B cell (primary cell): ENCODE measurements at regions of chr1 and their contacts with region 1.

Region 1: DNA sequence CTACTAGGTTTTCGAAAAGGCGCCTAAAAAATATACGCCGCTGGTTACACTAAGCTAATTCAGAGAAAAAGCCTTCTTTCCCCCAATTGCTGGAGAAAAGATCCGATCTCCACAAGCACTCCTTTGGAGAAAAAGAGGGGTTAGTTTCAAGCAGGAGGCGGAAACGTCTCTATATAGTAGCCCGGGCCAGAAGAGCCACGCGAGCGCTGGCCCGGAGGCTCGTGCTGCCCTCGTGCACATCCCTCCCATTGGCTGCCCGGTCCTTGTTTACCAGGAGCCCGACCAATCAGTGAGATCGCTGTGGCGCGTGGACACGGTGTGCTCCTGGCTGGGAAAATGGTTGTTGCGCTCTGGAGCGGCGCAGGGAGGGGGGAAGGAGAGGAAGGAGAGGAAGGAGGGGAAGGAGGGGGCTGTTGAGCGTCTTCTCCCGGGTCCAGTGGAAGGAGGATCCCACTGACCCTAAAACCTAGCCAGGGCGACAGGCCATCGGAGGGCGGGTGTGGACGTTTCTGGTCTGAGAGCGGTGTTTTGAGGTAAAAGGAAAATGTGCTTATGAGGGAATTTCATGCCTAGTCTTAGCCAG is at the start of gene TXNIP:
- DNase-seq: peak; percentile 89
- ATAC-seq: peak; percentile 72
- H3K4me3 ChIP-seq: peak within 1 kb of the TSS; percentile 81 to 100 (median 95)
- H3K4me3 Mint-ChIP-seq: peak within 1 kb of the TSS; percentile 95
- H3K27ac ChIP-seq: peak within 1 kb of the TSS; percentile 82 to 96
- H3K27ac Mint-ChIP-seq: peak within 1 kb of the TSS; percentile 100
- H3K4me1 ChIP-seq: peaks cover 56 to 67% of the 10 kb centered on the region in 2 donors
- H3K4me1 Mint-ChIP-seq: peaks cover 73% of the 10 kb centered on the region
- H3K27me3 ChIP-seq: no peaks in the 10 kb centered on the region
- H3K27me3 Mint-ChIP-seq: no peaks in the 10 kb centered on the region
- CTCF ChIP-seq: no peak
- total RNA-seq, gene TXNIP: 522 and 542 TPM in 2 replicates

Region 2: GRCh38 chr1:145918144-145918992 is 78.2 kb before region 1 on chr1 and contains the start of gene PEX11B:
- CTCF ChIA-PET with region 1: no interaction called
- POLR2A ChIA-PET with region 1: interaction called, 4 read pairs
- intact Hi-C with region 1: loop called (anchors 2 kb)
- DNase-seq: peak; percentile 97
- ATAC-seq: peak; percentile 90
- H3K4me3 ChIP-seq: peak within 1 kb of the TSS; percentile 69 to 98 (median 80)
- H3K4me3 Mint-ChIP-seq: peak within 1 kb of the TSS; percentile 92
- H3K27ac ChIP-seq: peak within 1 kb of the TSS; percentile 74 to 79
- H3K27ac Mint-ChIP-seq: peak within 1 kb of the TSS; percentile 95
- H3K4me1 ChIP-seq: peaks cover 15 to 24% of the 10 kb centered on the region in 2 donors
- H3K4me1 Mint-ChIP-seq: peaks cover 36% of the 10 kb centered on the region
- H3K27me3 ChIP-seq: no peaks in the 10 kb centered on the region
- H3K27me3 Mint-ChIP-seq: no peaks in the 10 kb centered on the region
- CTCF ChIP-seq: no peak
- total RNA-seq, gene PEX11B: 39.1 and 48.1 TPM in 2 replicates

Region 3: GRCh38 chr1:145957443-145958319 is 38.8 kb before region 1 on chr1 and contains the start of gene LIX1L:
- CTCF ChIA-PET with region 1: interaction called, 5 read pairs
- POLR2A ChIA-PET with region 1: interaction called, 3 read pairs
- intact Hi-C with region 1: loop called (anchors 1 kb)
- DNase-seq: peak; percentile 96
- ATAC-seq: peak; percentile 89
- H3K4me3 ChIP-seq: peak within 1 kb of the TSS; percentile 64 to 88 (median 74)
- H3K4me3 Mint-ChIP-seq: peak within 1 kb of the TSS; percentile 99
- H3K27ac ChIP-seq: peak within 1 kb of the TSS; percentile 36 to 83
- H3K27ac Mint-ChIP-seq: peak within 1 kb of the TSS; percentile 96
- H3K4me1 ChIP-seq: peaks cover 45 to 65% of the 10 kb centered on the region in 2 donors
- H3K4me1 Mint-ChIP-seq: peaks cover 76% of the 10 kb centered on the region
- H3K27me3 ChIP-seq: no peaks in the 10 kb centered on the region
- H3K27me3 Mint-ChIP-seq: no peaks in the 10 kb centered on the region
- CTCF ChIP-seq: no peak
- total RNA-seq, gene LIX1L: 31.7 and 32.2 TPM in 2 replicates

Region 4: GRCh38 chr1:145985502-145986439 is 10.8 kb before region 1 on chr1:
- CTCF ChIA-PET with region 1: interaction called, 207 read pairs
- POLR2A ChIA-PET with region 1: interaction called, 131 read pairs
- intact Hi-C with region 1: no loop called
- DNase-seq: no peak
- ATAC-seq: peak; percentile 24
- H3K4me3 ChIP-seq: no peak overlapping the region
- H3K4me3 Mint-ChIP-seq: peak overlapping the region; percentile 49
- H3K27ac ChIP-seq: peak overlapping the region; percentile 41 to 43
- H3K27ac Mint-ChIP-seq: peak overlapping the region; percentile 93
- H3K4me1 ChIP-seq: peaks cover 65 to 67% of the 10 kb centered on the region in 2 donors
- H3K4me1 Mint-ChIP-seq: peaks cover 77% of the 10 kb centered on the region
- H3K27me3 ChIP-seq: no peaks in the 10 kb centered on the region
- H3K27me3 Mint-ChIP-seq: no peaks in the 10 kb centered on the region
- CTCF ChIP-seq: no peak

Region 5: DNA sequence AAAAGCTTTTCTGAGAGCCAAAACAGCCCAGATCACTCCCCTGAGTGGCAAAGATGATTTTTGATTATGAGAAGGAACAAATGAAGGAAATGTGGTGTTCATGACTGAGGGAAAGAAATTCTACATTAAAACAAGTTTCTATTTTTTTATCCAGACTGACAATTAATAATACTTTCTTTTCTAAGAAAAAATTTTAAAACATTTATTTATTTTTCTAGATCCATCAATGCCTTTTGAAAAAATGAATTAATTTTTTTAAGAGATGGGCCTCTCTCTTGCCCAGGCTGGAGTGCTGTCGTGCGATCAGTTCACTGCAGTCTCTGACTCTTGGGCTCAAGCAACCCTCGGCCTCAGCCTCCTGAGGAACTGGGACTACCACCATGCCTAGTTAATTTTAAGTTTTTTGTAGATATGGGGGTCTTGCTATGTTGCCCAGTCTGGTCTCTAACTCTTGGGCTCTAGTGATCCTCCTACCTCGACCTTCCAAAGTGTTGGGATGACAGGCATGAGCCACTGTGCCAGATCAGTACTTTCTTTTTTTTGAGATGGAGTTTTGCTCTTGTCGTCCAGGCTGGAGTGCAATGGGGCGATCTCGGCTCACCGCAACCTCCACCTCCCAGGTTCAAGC is 11.1 kb after region 1 on chr1:
- CTCF ChIA-PET with region 1: interaction called, 135 read pairs
- POLR2A ChIA-PET with region 1: interaction called, 31 read pairs
- intact Hi-C with region 1: loop called (anchors 1 kb)
- DNase-seq: no peak
- ATAC-seq: no peak
- H3K4me3 ChIP-seq: no peak overlapping the region
- H3K4me3 Mint-ChIP-seq: no peak overlapping the region
- H3K27ac ChIP-seq: peak overlapping the region in 1 of 2 donors; percentile 83
- H3K27ac Mint-ChIP-seq: peak overlapping the region; percentile 95
- H3K4me1 ChIP-seq: peaks cover 13 to 24% of the 10 kb centered on the region in 2 donors
- H3K4me1 Mint-ChIP-seq: peaks cover 22% of the 10 kb centered on the region
- H3K27me3 ChIP-seq: no peaks in the 10 kb centered on the region
- H3K27me3 Mint-ChIP-seq: no peaks in the 10 kb centered on the region
- CTCF ChIP-seq: peak; percentile 18

Region 6: GRCh38 chr1:146012737-146013403 is 16.3 kb after region 1 on chr1:
- CTCF ChIA-PET with region 1: interaction called, 135 read pairs
- POLR2A ChIA-PET with region 1: interaction called, 31 read pairs
- intact Hi-C with region 1: loop called (anchors 2 kb)
- DNase-seq: peak; percentile 82
- ATAC-seq: peak; percentile 51
- H3K4me3 ChIP-seq: no peak overlapping the region
- H3K4me3 Mint-ChIP-seq: no peak overlapping the region
- H3K27ac ChIP-seq: no peak overlapping the region
- H3K27ac Mint-ChIP-seq: no peak overlapping the region
- H3K4me1 ChIP-seq: peaks cover 0 to under 1% of the 10 kb centered on the region in 2 donors
- H3K4me1 Mint-ChIP-seq: peaks cover 2% of the 10 kb centered on the region
- H3K27me3 ChIP-seq: peaks cover 0 to 4% (median 0%) of the 10 kb centered on the region in 4 experiments
- H3K27me3 Mint-ChIP-seq: peaks cover 14% of the 10 kb centered on the region
- CTCF ChIP-seq: peak; percentile 95

Region 7: GRCh38 chr1:146036965-146037646 is 40.6 kb after region 1 on chr1:
- CTCF ChIA-PET with region 1: interaction called, 3 read pairs
- POLR2A ChIA-PET with region 1: interaction called, 4 read pairs
- intact Hi-C with region 1: loop called (anchors 1 kb)
- DNase-seq: peak; percentile 90
- ATAC-seq: peak; percentile 55
- H3K4me3 ChIP-seq: peak overlapping the region; percentile 84 to 96 (median 93)
- H3K4me3 Mint-ChIP-seq: peak overlapping the region; percentile 99
- H3K27ac ChIP-seq: peak overlapping the region; percentile 74 to 83
- H3K27ac Mint-ChIP-seq: peak overlapping the region; percentile 98
- H3K4me1 ChIP-seq: peaks cover 27 to 30% of the 10 kb centered on the region in 2 donors
- H3K4me1 Mint-ChIP-seq: peaks cover 37% of the 10 kb centered on the region
- H3K27me3 ChIP-seq: no peaks in the 10 kb centered on the region
- H3K27me3 Mint-ChIP-seq: no peaks in the 10 kb centered on the region
- CTCF ChIP-seq: no peak